IMR-90 (cell line): ENCODE measurements at regions of chr18 and their contacts with region 1.

Region 1: DNA sequence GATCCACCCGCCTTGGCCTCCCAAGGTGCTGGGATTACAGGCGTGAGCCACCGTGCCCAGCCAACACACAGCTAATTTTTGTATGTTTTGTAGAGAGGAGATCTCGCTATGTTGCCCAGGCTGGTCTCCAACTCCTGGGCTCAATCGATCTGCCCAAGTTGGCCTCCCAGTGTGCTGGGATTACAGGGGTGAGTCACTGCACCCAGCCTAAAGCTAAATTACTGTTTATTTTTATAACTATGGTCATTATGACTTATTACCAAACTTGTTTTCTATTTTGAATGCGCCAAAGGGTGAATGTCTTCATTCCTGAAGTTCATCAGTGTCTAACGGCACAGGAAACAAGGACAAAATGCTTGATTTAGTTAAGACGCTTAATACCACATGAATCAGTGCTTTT is 38.9 kb upstream of the GREB1L start:
- DNase-seq: no peak
- ATAC-seq: no peak
- H3K4me3 ChIP-seq: no peak overlapping the region
- H3K27ac ChIP-seq: no peak overlapping the region
- H3K4me1 ChIP-seq: no peaks in the 10 kb centered on the region
- H3K27me3 ChIP-seq: peaks cover 2% of the 10 kb centered on the region; the same call in 1 of the 2 replicates
- CTCF ChIP-seq: no peak
- POLR2A ChIP-seq: no peak
- RAD21 ChIP-seq: no peak

Region 2: GRCh38 chr18:21155443-21155842 is 47.7 kb before region 1 on chr18:
- CTCF ChIA-PET with region 1: no interaction called
- POLR2A ChIA-PET with region 1: no interaction called
- dilution Hi-C with region 1: no loop called
- in situ Hi-C with region 1: loop called (anchors 10 kb)
- intact Hi-C with region 1: no loop called
- DNase-seq: no peak
- ATAC-seq: no peak
- H3K4me3 ChIP-seq: no peak overlapping the region
- H3K27ac ChIP-seq: no peak overlapping the region
- H3K4me1 ChIP-seq: no peaks in the 10 kb centered on the region
- H3K27me3 ChIP-seq: no peaks in the 10 kb centered on the region
- CTCF ChIP-seq: no peak
- POLR2A ChIP-seq: no peak
- RAD21 ChIP-seq: no peak

Region 3: GRCh38 chr18:21315741-21316187 is 112.7 kb after region 1 on chr18:
- CTCF ChIA-PET with region 1: no interaction called
- POLR2A ChIA-PET with region 1: no interaction called
- dilution Hi-C with region 1: no loop called
- in situ Hi-C with region 1: no loop called
- intact Hi-C with region 1: no loop called
- DNase-seq: no peak
- ATAC-seq: no peak
- H3K4me3 ChIP-seq: no peak overlapping the region
- H3K27ac ChIP-seq: no peak overlapping the region
- H3K4me1 ChIP-seq: no peaks in the 10 kb centered on the region
- H3K27me3 ChIP-seq: peaks cover 8% of the 10 kb centered on the region
- CTCF ChIP-seq: no peak
- POLR2A ChIP-seq: no peak
- RAD21 ChIP-seq: no peak

Region 4: GRCh38 chr18:21361307-21361880 is 158.3 kb after region 1 on chr18:
- CTCF ChIA-PET with region 1: no interaction called
- POLR2A ChIA-PET with region 1: no interaction called
- dilution Hi-C with region 1: no loop called
- in situ Hi-C with region 1: no loop called
- intact Hi-C with region 1: loop called (anchors 5 kb)
- DNase-seq: no peak
- ATAC-seq: no peak
- H3K4me3 ChIP-seq: no peak overlapping the region
- H3K27ac ChIP-seq: no peak overlapping the region
- H3K4me1 ChIP-seq: no peaks in the 10 kb centered on the region
- H3K27me3 ChIP-seq: peaks cover 4% of the 10 kb centered on the region; the same call in 1 of the 2 replicates
- CTCF ChIP-seq: no peak
- POLR2A ChIP-seq: no peak
- RAD21 ChIP-seq: no peak

Region 5: DNA sequence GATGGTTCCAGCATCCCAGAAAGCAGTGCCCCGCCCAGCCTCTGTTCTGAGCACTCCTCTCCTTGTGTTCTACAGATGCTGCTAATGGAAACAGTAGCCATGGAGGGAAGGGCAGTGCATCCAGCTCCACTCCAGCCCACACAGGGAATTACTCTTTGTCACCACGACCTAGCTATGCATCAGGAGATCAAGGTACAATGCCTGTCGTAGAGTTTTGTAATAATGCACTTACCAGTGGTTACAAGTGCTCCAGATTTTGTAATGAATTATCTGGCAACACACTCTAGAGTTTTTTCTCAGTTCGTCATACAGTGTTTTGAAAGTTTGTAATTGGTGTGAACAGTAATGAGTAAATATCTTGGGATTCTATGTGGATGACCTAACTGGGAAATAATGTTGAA is 236.3 kb after region 1 on chr18:
- CTCF ChIA-PET with region 1: no interaction called
- POLR2A ChIA-PET with region 1: no interaction called
- dilution Hi-C with region 1: no loop called
- in situ Hi-C with region 1: loop called (anchors 5 kb)
- intact Hi-C with region 1: no loop called
- DNase-seq: peak; percentile 59
- ATAC-seq: peak; percentile 77
- H3K4me3 ChIP-seq: no peak overlapping the region
- H3K27ac ChIP-seq: no peak overlapping the region
- H3K4me1 ChIP-seq: peaks cover 4% of the 10 kb centered on the region
- H3K27me3 ChIP-seq: peaks cover 6% of the 10 kb centered on the region
- CTCF ChIP-seq: no peak
- POLR2A ChIP-seq: no peak
- RAD21 ChIP-seq: no peak